Breast epithelium (tissue), 4 donors: ENCODE measurements at regions of chr22 and their contacts with region 1.

Region 1: GRCh38 chr22:24133187-24133965 is 47.9 kb upstream of the SUSD2 start:
- DNase-seq: no peak
- H3K4me3 ChIP-seq: no peak overlapping the region
- H3K27ac ChIP-seq: peak overlapping the region in 1 of 2 donors; percentile 66
- H3K4me1 ChIP-seq: no peaks in the 10 kb centered on the region
- H3K27me3 ChIP-seq: no peaks in the 10 kb centered on the region
- CTCF ChIP-seq: no peak
- POLR2A ChIP-seq: no peak

Region 2: DNA sequence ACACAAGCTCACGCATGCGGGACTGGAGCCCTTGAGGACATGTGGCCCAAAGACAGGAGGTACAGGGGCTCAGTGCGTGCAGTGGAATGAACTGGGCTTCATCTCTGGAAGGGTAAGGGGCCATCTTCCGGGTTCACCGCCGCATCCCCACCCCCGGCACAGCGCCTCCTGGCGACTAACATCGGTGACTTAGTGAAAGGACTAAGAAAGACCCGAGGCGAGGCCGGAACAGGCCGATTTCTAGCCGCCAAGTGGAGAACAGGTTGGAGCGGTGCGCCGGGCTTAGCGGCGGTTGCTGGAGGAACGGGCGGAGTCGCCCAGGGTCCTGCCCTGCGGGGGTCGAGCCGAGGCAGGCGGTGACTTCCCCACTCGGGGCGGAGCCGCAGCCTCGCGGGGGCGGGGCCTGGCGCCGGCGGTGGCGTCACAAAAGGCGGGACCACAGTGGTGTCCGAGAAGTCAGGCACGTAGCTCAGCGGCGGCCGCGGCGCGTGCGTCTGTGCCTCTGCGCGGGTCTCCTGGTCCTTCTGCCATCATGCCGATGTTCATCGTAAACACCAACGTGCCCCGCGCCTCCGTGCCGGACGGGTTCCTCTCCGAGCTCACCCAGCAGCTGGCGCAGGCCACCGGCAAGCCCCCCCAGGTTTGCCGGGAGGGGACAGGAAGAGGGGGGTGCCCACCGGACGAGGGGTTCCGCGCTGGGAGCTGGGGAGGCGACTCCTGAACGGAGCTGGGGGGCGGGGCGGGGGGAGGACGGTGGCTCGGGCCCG is 239.2 kb before region 1 on chr22 and contains the start of gene MIF:
- intact Hi-C with region 1: no loop called
- DNase-seq: peak; percentile 91 to 96
- H3K4me3 ChIP-seq: peak within 1 kb of the TSS; percentile 75 to 88 (median 86)
- H3K27ac ChIP-seq: peak within 1 kb of the TSS; percentile 98 to 99
- H3K4me1 ChIP-seq: no peaks in the 10 kb centered on the region
- H3K27me3 ChIP-seq: no peaks in the 10 kb centered on the region
- CTCF ChIP-seq: peak; percentile 83 to 91 (median 89)
- POLR2A ChIP-seq: peak; percentile 94
- total RNA-seq, gene MIF: 191 to 466 (median 261) TPM

Region 3: DNA sequence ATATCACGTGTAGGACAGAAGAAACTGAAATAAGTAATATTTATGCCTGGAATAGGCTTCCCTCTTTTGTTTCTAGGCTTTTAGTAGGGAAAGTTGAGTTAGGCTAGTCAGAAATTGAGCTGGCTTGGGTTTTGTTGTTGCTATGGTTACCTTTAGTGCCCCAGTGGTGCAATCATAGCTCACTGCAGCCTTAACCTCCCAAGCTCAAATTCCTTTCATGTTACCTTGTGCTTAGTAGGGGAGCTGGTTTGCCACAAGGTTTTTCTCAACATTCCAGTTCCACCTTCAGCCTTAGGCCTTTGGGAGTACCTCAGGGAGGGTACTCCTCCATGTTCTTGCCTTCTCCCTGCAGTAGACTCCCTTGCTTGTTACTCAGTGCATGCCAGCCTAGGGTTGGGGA is 21.2 kb before region 1 on chr22:
- intact Hi-C with region 1: loop called (anchors 1 kb)
- DNase-seq: no peak
- H3K4me3 ChIP-seq: no peak overlapping the region
- H3K27ac ChIP-seq: no peak overlapping the region
- H3K4me1 ChIP-seq: peaks cover 0 to 3% of the 10 kb centered on the region in 2 donors
- H3K27me3 ChIP-seq: no peaks in the 10 kb centered on the region
- CTCF ChIP-seq: no peak
- POLR2A ChIP-seq: no peak

Region 4: DNA sequence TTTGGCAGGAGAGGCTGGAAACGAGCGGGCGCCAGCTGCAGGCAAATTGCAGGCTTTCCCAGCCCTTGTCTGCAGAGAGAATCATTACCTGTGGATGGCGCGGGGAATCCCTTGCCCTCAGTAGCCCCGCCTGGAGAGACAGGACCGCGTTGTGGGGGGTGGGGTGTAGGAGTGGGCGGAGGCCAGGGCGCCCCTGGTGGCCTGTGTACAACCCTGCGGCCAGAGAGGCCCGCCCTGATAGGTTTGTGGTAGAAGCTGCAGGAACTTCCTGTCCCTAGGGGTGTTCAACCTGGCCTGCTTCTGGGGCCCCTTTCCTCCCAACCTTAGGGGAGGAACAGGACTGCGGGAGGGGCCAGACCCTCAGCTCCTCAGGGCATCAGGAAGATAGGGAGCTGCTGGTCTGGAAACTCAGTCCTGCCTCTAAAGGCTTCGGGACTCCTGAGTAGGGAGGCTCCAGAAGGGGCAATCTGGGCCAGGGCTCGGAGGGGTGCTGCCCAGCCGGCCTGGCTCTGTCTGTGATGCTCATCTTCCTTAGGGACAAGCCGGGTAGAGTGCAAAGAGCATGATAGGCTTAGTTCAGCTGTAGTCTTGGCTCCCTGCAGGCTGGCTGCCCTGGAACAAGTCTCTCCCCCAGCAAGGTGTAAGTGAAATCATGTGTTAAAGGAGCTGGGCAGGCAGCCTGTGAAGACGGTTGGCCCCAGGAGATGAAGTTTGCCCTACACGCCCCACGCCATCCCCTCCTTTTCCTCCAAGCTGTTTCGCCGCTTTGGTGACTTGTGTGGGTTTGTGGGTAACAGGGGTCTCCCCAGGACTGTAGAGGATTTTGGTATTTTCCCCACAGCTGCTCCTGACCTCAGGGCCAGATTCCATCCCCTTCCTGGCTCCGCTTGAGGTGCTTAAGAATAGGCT is 23.8 kb after region 1 on chr22:
- intact Hi-C with region 1: no loop called
- DNase-seq: peak; percentile 67 to 77
- H3K4me3 ChIP-seq: peak overlapping the region; percentile 81 to 95 (median 85)
- H3K27ac ChIP-seq: peak overlapping the region; percentile 55 to 84
- H3K4me1 ChIP-seq: peaks cover 3 to 10% of the 10 kb centered on the region in 2 donors
- H3K27me3 ChIP-seq: no peaks in the 10 kb centered on the region
- CTCF ChIP-seq: peak; percentile 50 to 75 (median 71)
- POLR2A ChIP-seq: no peak